Common myeloid progenitor, CD34-positive (primary cell): ENCODE measurements at regions of chr2 and their contacts with region 1.

Region 1: GRCh38 chr2:62787386-62787785 is 81.9 kb downstream of the EHBP1 start:
- DNase-seq: peak; percentile 38 to 60 (median 58)
- H3K4me3 ChIP-seq: no peak overlapping the region
- H3K27ac ChIP-seq: no peak overlapping the region
- H3K4me1 ChIP-seq: no peaks in the 10 kb centered on the region
- H3K27me3 ChIP-seq: no peaks in the 10 kb centered on the region

Region 2: GRCh38 chr2:62321380-62322289 is 465.8 kb before region 1 on chr2:
- CTCF ChIA-PET with region 1: no interaction called
- POLR2A ChIA-PET with region 1: no interaction called
- DNase-seq: no peak
- H3K4me3 ChIP-seq: no peak overlapping the region
- H3K27ac ChIP-seq: no peak overlapping the region
- H3K4me1 ChIP-seq: peaks cover 0 to 4% (median 0%) of the 10 kb centered on the region in 4 experiments
- H3K27me3 ChIP-seq: no peaks in the 10 kb centered on the region

Region 3: DNA sequence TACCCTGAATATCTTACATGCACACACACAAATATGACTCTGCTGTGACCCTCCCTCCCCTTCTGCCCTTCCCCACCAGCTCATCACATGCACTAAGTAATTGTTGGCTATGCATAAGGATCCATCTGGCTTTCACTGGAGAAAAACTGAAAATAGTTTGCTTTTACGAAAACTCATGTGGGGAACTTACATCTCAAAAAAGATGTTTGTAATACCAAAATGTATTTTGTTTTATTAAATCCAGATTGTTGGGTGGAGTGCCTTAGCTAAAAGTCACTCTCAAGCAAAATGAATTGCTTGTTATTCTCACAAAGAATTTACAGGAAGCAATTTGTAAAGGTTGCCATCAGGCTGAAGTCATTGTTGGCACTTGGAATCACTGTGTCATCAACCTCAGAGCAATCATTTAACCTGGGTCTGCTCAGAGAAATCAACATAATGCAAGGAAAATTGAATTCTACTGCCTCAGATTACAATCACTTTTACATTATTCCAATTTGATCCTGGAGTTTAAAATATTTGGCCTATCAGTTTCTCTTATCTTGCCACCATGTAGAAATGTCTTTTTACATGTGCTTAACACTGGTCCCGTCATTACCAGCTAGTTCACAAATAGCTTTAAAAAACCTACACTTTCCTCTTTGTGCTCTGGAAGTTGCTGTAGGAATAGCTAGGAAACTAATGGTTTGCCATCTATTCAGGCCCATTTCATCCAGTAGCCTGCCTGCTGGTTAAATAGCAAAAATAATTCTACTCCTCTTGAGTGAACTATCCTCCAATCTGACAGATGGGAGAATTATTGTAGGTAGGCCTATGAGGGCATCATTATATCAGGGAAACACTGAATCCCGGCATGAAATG is 191.1 kb before region 1 on chr2:
- CTCF ChIA-PET with region 1: no interaction called
- POLR2A ChIA-PET with region 1: no interaction called
- DNase-seq: no peak
- H3K4me3 ChIP-seq: no peak overlapping the region
- H3K27ac ChIP-seq: no peak overlapping the region
- H3K4me1 ChIP-seq: no peaks in the 10 kb centered on the region
- H3K27me3 ChIP-seq: no peaks in the 10 kb centered on the region

Region 4: GRCh38 chr2:62774555-62775366 is 12.6 kb before region 1 on chr2:
- CTCF ChIA-PET with region 1: interaction called, 13 read pairs
- POLR2A ChIA-PET with region 1: no interaction called
- DNase-seq: peak; percentile 49 to 75 (median 69)
- H3K4me3 ChIP-seq: no peak overlapping the region
- H3K27ac ChIP-seq: no peak overlapping the region
- H3K4me1 ChIP-seq: peaks cover 0 to 27% (median 10%) of the 10 kb centered on the region in 4 experiments
- H3K27me3 ChIP-seq: no peaks in the 10 kb centered on the region

Region 5: GRCh38 chr2:63023444-63023843 is 236.1 kb after region 1 on chr2:
- CTCF ChIA-PET with region 1: interaction called, 11 read pairs
- POLR2A ChIA-PET with region 1: no interaction called
- DNase-seq: peak; percentile 33 to 60 (median 60)
- H3K4me3 ChIP-seq: no peak overlapping the region
- H3K27ac ChIP-seq: no peak overlapping the region
- H3K4me1 ChIP-seq: no peaks in the 10 kb centered on the region
- H3K27me3 ChIP-seq: no peaks in the 10 kb centered on the region

Region 6: DNA sequence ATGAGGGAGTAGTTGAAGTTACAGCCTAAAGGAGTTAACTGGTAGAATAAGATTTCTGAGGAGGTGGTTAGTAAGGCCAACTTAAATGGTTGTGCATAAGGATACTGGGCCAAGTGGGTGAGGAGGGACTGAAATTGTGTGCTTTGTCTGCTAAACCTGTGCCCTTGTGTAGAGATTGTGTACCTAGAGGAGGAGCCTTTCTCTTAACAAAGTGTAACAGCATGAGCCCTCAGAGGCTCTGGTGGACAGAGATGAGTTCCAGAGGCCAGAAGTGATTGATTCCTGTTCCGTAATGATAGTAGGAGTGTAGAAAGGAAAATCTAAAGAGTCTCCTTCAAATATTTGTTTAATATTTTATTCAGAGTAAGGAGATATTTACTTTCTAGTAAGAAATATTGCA is 306.1 kb after region 1 on chr2:
- CTCF ChIA-PET with region 1: no interaction called
- POLR2A ChIA-PET with region 1: no interaction called
- DNase-seq: no peak
- H3K4me3 ChIP-seq: no peak overlapping the region
- H3K27ac ChIP-seq: no peak overlapping the region
- H3K4me1 ChIP-seq: no peaks in the 10 kb centered on the region
- H3K27me3 ChIP-seq: no peaks in the 10 kb centered on the region